ENCODE measurements at regions of chr9 and their contacts with region 1.

Region 1: DNA sequence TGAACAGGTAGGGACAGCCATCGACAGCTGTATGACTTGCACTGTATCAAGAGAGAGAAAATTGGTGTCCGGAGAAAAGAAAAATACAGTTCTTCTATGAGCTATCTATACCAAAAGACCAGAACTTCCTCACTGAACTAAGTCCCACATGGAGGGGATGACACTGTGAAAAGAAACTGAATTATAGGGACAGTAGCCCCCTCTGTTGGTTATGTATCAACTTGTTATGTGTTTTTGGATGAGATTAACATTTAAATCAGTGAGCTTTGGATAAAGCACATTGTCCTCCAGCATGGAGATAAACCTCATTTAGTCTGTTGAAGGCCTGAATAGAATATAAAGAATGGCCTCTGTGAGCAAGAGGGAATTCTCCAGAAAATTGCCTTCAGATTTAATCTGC is 176.6 kb upstream of the SH3GL2 start:
- DNase-seq: peak; percentile 34
- ATAC-seq: peak; percentile 44; the same call in 1 of the 2 replicates
- H3K4me3 ChIP-seq: no peak overlapping the region
- H3K27ac ChIP-seq: no peak overlapping the region
- H3K4me1 ChIP-seq: no peaks in the 10 kb centered on the region
- H3K27me3 ChIP-seq: no peaks in the 10 kb centered on the region
- CTCF ChIP-seq: peak; percentile 37
- POLR2A ChIP-seq: no peak
- RAD21 ChIP-seq: peak; percentile 40

Region 2: DNA sequence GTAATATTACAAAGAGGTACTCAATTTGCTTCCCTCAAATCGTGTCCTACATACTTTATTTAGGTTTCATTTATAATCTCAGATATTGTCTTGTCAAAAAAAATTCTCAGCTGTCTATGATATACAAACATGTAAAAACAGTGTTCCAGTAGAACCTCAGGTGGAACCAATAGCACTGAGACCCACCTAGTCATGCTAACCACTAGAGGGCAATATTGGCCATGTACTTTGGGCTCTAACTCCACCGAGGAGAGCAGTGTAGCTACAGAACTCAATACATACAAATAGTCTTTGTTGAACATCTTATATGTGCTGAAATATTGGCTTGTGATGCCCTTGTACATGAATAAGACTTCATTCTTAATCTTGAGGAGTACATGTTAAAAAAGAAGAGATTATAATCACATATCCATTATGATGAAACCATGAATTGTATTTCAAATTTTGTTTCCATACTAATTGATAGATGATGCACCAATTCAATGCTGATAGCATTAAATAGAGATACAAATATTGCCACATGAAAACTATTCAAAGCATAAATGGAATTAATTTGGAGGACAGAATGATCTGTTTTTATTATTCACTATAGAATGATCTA is 338.7 kb before region 1 on chr9:
- CTCF ChIA-PET with region 1: interaction called, 3 read pairs
- POLR2A ChIA-PET with region 1: no interaction called
- dilution Hi-C with region 1: no loop called
- in situ Hi-C with region 1: no loop called
- intact Hi-C with region 1: loop called (anchors 1 kb)
- DNase-seq: peak; percentile 64
- ATAC-seq: peak; percentile 93
- H3K4me3 ChIP-seq: no peak overlapping the region
- H3K27ac ChIP-seq: no peak overlapping the region
- H3K4me1 ChIP-seq: no peaks in the 10 kb centered on the region
- H3K27me3 ChIP-seq: no peaks in the 10 kb centered on the region
- CTCF ChIP-seq: peak; percentile 67
- POLR2A ChIP-seq: no peak
- RAD21 ChIP-seq: peak; percentile 73

Region 3: DNA sequence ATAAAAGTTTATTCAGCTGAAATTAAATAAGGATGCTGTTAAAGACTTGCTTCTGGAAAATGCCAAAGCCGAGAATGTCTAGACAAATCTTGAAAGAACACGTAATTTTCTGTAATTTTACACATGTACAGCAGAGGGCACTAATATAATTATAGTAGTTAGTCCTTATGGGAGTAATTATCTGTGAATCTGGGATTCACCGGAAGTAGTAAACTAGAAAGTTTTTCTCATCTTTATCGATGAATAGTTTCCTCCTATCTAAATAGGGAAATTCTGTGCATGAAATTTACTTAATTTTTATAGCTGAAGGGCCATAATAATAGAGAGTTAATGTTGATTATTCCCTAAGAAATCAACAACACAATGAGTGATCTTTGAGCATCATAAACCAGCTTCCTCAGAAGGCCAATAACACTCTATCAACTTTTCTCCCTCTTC is 285.9 kb before region 1 on chr9:
- CTCF ChIA-PET with region 1: no interaction called
- POLR2A ChIA-PET with region 1: no interaction called
- dilution Hi-C with region 1: no loop called
- in situ Hi-C with region 1: no loop called
- intact Hi-C with region 1: loop called (anchors 5 kb)
- DNase-seq: peak; percentile 54
- ATAC-seq: peak; percentile 77
- H3K4me3 ChIP-seq: no peak overlapping the region
- H3K27ac ChIP-seq: no peak overlapping the region
- H3K4me1 ChIP-seq: no peaks in the 10 kb centered on the region
- H3K27me3 ChIP-seq: no peaks in the 10 kb centered on the region
- CTCF ChIP-seq: peak; percentile 50
- POLR2A ChIP-seq: no peak
- RAD21 ChIP-seq: peak; percentile 39

Region 4: DNA sequence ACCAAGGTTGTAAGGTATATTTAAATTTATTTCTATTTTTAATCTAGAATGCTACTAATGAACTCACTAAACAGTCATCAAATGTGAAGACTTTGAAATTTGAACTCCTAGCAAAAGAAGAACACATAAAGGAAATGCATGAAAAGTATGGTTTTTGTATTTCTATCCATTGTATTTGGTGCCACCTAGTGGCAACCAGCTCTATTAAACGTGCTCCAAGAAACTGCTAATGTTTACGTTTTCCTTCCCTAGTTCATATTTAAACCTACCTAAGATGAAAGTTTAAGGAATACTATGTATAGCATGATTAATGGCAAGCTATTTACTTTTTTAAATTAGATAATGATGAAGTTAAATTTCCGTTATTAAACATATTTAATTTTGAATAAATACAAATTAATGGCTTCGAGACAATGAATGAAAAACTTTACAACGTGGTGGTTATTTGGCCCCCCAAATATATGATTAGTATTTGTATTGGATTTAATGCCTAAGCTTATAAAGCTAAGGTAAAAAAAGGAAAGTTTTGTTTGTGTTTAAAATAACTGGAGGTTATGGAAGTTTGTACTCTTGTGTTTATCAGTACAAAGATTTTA is 60.7 kb after region 1 on chr9:
- CTCF ChIA-PET with region 1: no interaction called
- POLR2A ChIA-PET with region 1: no interaction called
- dilution Hi-C with region 1: no loop called
- in situ Hi-C with region 1: no loop called
- intact Hi-C with region 1: no loop called
- DNase-seq: peak; percentile 78
- ATAC-seq: peak; percentile 82
- H3K4me3 ChIP-seq: no peak overlapping the region
- H3K27ac ChIP-seq: no peak overlapping the region
- H3K4me1 ChIP-seq: no peaks in the 10 kb centered on the region
- H3K27me3 ChIP-seq: no peaks in the 10 kb centered on the region
- CTCF ChIP-seq: peak; percentile 83
- POLR2A ChIP-seq: no peak
- RAD21 ChIP-seq: peak; percentile 87

Measured in IMR-90 (cell line).